Uterus (tissue), 4 donors: ENCODE measurements at regions of chr6 and their contacts with region 1.

Region 1: DNA sequence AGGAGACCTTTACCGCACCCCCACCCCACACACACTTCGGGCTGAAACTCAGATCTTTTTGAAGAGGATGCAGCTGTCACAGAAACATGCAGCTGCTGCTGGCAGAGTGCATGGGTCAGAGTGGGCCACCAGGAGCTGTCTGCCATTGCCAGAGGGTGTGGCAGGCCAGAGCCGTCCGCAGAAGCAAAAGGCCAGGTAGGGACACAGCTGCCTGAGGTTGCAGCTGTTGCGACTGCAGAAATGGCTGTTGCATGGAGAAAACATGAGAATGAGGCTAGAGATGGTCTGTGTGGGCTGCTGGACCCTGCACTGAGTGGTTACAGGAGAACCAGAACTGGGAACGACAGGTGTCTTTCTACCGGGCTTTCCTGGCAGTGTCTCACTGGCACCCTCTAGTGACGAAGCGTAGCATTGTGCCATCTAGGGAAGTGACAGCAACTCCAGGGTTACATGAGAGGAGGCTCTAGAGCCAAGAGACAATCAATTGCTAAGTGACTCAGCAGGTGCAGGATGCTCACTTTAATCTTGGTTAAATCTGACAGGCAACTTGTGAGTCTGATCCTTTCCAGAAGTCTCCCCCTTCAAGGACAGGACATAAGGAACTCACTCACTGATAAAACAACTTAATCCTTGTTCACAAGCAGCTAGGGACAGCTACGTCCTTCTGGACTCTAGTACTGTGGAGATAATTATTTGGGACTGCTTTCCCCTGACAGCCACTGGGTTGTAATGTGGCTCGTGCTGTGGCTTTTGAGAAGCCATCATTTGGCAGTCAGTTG is 29.1 kb upstream of the SERPINB9 start:
- DNase-seq: peak; percentile 72 to 76
- H3K4me3 ChIP-seq: no peak overlapping the region
- H3K27ac ChIP-seq: no peak overlapping the region
- H3K4me1 ChIP-seq: no peaks in the 10 kb centered on the region
- H3K27me3 ChIP-seq: no peaks in the 10 kb centered on the region
- CTCF ChIP-seq: peak; percentile 86 to 93 (median 90)
- POLR2A ChIP-seq: no peak

Region 2: GRCh38 chr6:2563635-2564034 is 368.5 kb before region 1 on chr6:
- intact Hi-C with region 1: no loop called
- DNase-seq: no peak
- H3K4me3 ChIP-seq: no peak overlapping the region
- H3K27ac ChIP-seq: no peak overlapping the region
- H3K4me1 ChIP-seq: no peaks in the 10 kb centered on the region
- H3K27me3 ChIP-seq: no peaks in the 10 kb centered on the region
- CTCF ChIP-seq: no peak
- POLR2A ChIP-seq: no peak

Region 3: GRCh38 chr6:2841264-2842138 is 90.7 kb before region 1 on chr6 and contains the start of gene SERPINB1:
- intact Hi-C with region 1: loop called (anchors 10 kb)
- DNase-seq: peak; percentile 77 to 81
- H3K4me3 ChIP-seq: peak within 1 kb of the TSS; percentile 38 to 58
- H3K27ac ChIP-seq: peak within 1 kb of the TSS; percentile 90
- H3K4me1 ChIP-seq: no peaks in the 10 kb centered on the region
- H3K27me3 ChIP-seq: no peaks in the 10 kb centered on the region
- CTCF ChIP-seq: peak in 1 of 4 experiments; percentile 16
- POLR2A ChIP-seq: peak in 1 of 2 donors; percentile 54
- total RNA-seq, gene SERPINB1: 7.7 to 28.2 (median 17.2) TPM